Mammary epithelial cell (primary cell): ENCODE measurements at regions of chr12 and their contacts with region 1.

Region 1: DNA sequence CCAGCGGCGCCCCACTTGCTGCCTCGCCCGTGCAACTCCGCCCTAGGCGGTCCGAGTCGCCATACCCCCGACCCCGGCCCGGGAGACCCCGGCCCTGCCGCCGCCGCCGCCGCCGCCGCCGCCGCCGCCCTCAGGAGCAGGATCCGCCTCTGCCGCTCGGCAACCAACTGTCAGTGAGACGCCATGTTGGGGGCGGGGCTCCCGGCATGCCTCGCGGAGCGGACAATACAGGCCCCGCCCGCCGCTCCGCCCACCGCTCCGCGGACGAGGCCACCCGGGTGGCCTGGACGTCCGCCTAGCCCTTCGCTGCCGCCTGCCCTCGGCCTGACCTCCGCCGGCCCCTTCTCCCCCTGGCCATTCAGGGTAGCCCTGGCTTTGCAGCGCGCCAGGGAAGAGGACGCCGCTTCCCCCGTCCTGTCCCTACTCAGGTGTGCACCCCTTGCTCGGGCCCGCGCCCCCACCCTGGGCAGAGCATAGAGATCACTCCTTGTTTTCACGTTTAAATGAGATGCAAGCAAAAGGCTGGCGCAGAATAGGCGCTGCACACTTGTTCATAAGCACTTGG is at the start of gene HECTD4:
- DNase-seq: peak; percentile 80
- H3K4me3 ChIP-seq: peak within 1 kb of the TSS; percentile 63 to 77 (median 75)
- H3K27ac ChIP-seq: peak within 1 kb of the TSS; percentile 41
- H3K4me1 ChIP-seq: peaks cover 11% of the 10 kb centered on the region
- H3K27me3 ChIP-seq: no peaks in the 10 kb centered on the region
- CTCF ChIP-seq: no peak
- total RNA-seq, gene HECTD4: 30.7 to 36.1 TPM

Region 2: DNA sequence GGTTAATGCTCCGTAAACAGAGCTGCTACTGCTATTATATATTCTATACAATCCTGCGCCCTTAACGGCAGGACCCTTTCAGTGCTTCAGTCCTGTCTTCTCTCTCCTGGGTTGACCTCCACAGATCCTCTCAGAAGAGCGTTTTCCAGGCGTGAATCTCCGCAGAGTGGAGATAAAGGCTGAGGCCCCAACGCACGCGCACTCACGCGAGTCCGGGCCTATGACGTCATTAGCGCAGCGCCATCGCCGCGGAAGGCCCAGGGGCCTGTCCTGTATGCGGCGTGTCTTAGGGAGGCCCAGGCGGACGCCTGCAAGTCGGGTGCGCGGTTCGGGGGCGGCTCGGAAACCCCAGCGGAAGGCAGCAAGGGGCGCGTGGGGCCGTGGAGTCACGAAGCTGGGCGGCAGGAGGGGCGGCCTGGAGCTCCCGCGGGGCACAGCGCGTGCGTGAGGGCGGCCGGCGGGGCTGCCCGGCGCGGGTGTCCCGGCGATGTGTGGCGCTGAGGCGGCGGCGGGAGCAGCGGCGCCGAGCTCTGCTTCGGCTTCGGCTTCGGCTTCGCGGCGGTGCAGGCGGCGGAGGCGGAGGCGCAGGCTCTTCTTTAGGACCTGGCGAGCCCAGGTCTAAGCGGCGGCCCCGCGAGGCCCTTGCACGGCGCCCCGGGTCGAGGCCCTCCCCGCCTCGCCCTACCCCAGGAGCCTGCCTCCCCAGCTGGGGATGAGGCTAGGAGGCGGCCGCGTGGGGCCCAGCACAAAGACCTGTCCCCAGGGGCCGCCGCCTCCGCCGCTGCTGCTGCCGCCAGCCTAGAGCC is 540.4 kb before region 1 on chr12 and contains the start of gene MAPKAPK5:
- CTCF ChIA-PET with region 1: no interaction called
- dilution Hi-C with region 1: no loop called
- in situ Hi-C with region 1: no loop called
- intact Hi-C with region 1: loop called (anchors 10 kb)
- DNase-seq: peak; percentile 92
- H3K4me3 ChIP-seq: peak within 1 kb of the TSS; percentile 67 to 84 (median 68)
- H3K27ac ChIP-seq: peak within 1 kb of the TSS; percentile 83
- H3K4me1 ChIP-seq: peaks cover 12% of the 10 kb centered on the region
- H3K27me3 ChIP-seq: no peaks in the 10 kb centered on the region
- CTCF ChIP-seq: no peak
- total RNA-seq, gene MAPKAPK5: 34.5 to 46.7 TPM

Region 3: GRCh38 chr12:111942557-111942956 is 439.8 kb before region 1 on chr12:
- CTCF ChIA-PET with region 1: interaction called, 6 read pairs
- dilution Hi-C with region 1: no loop called
- in situ Hi-C with region 1: no loop called
- intact Hi-C with region 1: loop called (anchors 2 kb)
- DNase-seq: peak; percentile 74
- H3K4me3 ChIP-seq: no peak overlapping the region
- H3K27ac ChIP-seq: no peak overlapping the region
- H3K4me1 ChIP-seq: peaks cover 2% of the 10 kb centered on the region
- H3K27me3 ChIP-seq: no peaks in the 10 kb centered on the region
- CTCF ChIP-seq: no peak

Region 4: GRCh38 chr12:112108201-112109079 is 273.9 kb before region 1 on chr12 and contains the start of gene NAA25:
- CTCF ChIA-PET with region 1: interaction called, 5 read pairs
- dilution Hi-C with region 1: no loop called
- in situ Hi-C with region 1: loop called in 1 of 2 experiments (anchors 10 kb)
- intact Hi-C with region 1: loop called (anchors 1 kb)
- DNase-seq: peak; percentile 80
- H3K4me3 ChIP-seq: peak within 1 kb of the TSS; percentile 74 to 86 (median 83)
- H3K27ac ChIP-seq: peak within 1 kb of the TSS; percentile 90
- H3K4me1 ChIP-seq: peaks cover 34% of the 10 kb centered on the region
- H3K27me3 ChIP-seq: no peaks in the 10 kb centered on the region
- CTCF ChIP-seq: no peak
- total RNA-seq, gene NAA25: 23.7 to 37.0 TPM

Region 5: GRCh38 chr12:112116232-112117060 is 265.9 kb before region 1 on chr12:
- CTCF ChIA-PET with region 1: no interaction called
- dilution Hi-C with region 1: no loop called
- in situ Hi-C with region 1: no loop called
- intact Hi-C with region 1: loop called (anchors 1 kb)
- DNase-seq: no peak
- H3K4me3 ChIP-seq: no peak overlapping the region
- H3K27ac ChIP-seq: peak overlapping the region; percentile 20
- H3K4me1 ChIP-seq: peaks cover 30% of the 10 kb centered on the region
- H3K27me3 ChIP-seq: no peaks in the 10 kb centered on the region
- CTCF ChIP-seq: no peak

Region 6: GRCh38 chr12:112198120-112198733 is 184.1 kb before region 1 on chr12:
- CTCF ChIA-PET with region 1: interaction called, 8 read pairs
- dilution Hi-C with region 1: no loop called
- in situ Hi-C with region 1: loop called (anchors 5 to 10 kb)
- intact Hi-C with region 1: loop called (anchors 1 kb)
- DNase-seq: peak; percentile 17
- H3K4me3 ChIP-seq: no peak overlapping the region
- H3K27ac ChIP-seq: no peak overlapping the region
- H3K4me1 ChIP-seq: no peaks in the 10 kb centered on the region
- H3K27me3 ChIP-seq: no peaks in the 10 kb centered on the region
- CTCF ChIP-seq: peak; percentile 60 to 71

Region 7: GRCh38 chr12:112294793-112295192 is 87.5 kb before region 1 on chr12:
- CTCF ChIA-PET with region 1: no interaction called
- dilution Hi-C with region 1: no loop called
- in situ Hi-C with region 1: no loop called
- intact Hi-C with region 1: loop called (anchors 1 kb)
- DNase-seq: no peak
- H3K4me3 ChIP-seq: no peak overlapping the region
- H3K27ac ChIP-seq: no peak overlapping the region
- H3K4me1 ChIP-seq: no peaks in the 10 kb centered on the region
- H3K27me3 ChIP-seq: no peaks in the 10 kb centered on the region
- CTCF ChIP-seq: peak in 1 of 2 donors; percentile 16

Region 8: GRCh38 chr12:113098446-113098896 is 716.2 kb after region 1 on chr12:
- CTCF ChIA-PET with region 1: no interaction called
- dilution Hi-C with region 1: no loop called
- in situ Hi-C with region 1: no loop called
- intact Hi-C with region 1: no loop called
- DNase-seq: peak; percentile 97
- H3K4me3 ChIP-seq: no peak overlapping the region
- H3K27ac ChIP-seq: no peak overlapping the region
- H3K4me1 ChIP-seq: peaks cover 2% of the 10 kb centered on the region
- H3K27me3 ChIP-seq: no peaks in the 10 kb centered on the region
- CTCF ChIP-seq: peak; percentile 92 to 94